Stomach (tissue), 19 donors: ENCODE measurements at regions of chr1 and their contacts with region 1.

Region 1: GRCh38 chr1:163085041-163085903 is 16.1 kb downstream of the RGS4 start:
- DNase-seq: no peak
- H3K4me3 ChIP-seq: no peak overlapping the region
- H3K27ac ChIP-seq: peak overlapping the region in 3 of 5 donors; percentile 22 to 37 (median 34)
- H3K4me1 ChIP-seq: peaks cover 0 to 6% (median 0%) of the 10 kb centered on the region in 4 donors
- H3K27me3 ChIP-seq: no peaks in the 10 kb centered on the region
- CTCF ChIP-seq: no peak
- EP300 ChIP-seq: no peak
- POLR2A ChIP-seq: no peak

Region 2: DNA sequence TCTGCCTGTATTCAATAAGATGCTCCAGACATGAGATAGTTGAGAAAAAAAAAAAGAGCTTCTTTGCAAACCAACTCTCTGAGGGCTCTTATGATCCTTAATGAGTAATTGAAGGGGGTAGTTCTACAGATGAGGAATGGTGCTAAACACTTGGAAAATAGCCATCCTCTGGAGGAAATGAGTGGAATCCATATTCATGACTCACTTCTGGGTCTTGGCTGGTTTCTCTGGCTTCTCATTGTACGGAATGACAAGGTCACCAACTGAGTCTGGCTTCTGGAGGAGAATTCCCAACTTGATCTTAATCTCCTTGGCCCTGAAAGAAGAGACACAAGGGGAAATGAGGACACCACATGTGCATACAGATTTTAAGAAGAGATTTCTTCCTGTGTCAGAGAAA is 82.8 kb after region 1 on chr1:
- intact Hi-C with region 1: loop called (anchors 10 kb)
- DNase-seq: peak in 1 of 2 donors; percentile 65
- H3K4me3 ChIP-seq: no peak overlapping the region
- H3K27ac ChIP-seq: peak overlapping the region in 3 of 5 donors; percentile 6 to 63 (median 30)
- H3K4me1 ChIP-seq: peaks cover 3 to 55% (median 29%) of the 10 kb centered on the region in 4 donors
- H3K27me3 ChIP-seq: no peaks in the 10 kb centered on the region
- CTCF ChIP-seq: no peak
- EP300 ChIP-seq: no peak
- POLR2A ChIP-seq: no peak